GM12878 (cell line): ENCODE measurements at regions of chr3 and their contacts with region 1.

Region 1: GRCh38 chr3:36700537-36701248 is 63.7 kb downstream of the DCLK3 start:
- DNase-seq: no peak
- ATAC-seq: peak; percentile 95
- H3K4me3 ChIP-seq: no peak overlapping the region
- H3K27ac ChIP-seq: no peak overlapping the region
- H3K4me1 ChIP-seq: no peaks in the 10 kb centered on the region
- H3K27me3 ChIP-seq: peaks cover 0 to 1% of the 10 kb centered on the region in 2 experiments; a peak in 1 of 4 replicates
- CTCF ChIP-seq: peak; percentile 78 to 88 (median 86)
- EP300 ChIP-seq: no peak
- POLR2A ChIP-seq: no peak
- RAD21 ChIP-seq: peak; percentile 94

Region 2: GRCh38 chr3:35965908-35966307 is 734.8 kb before region 1 on chr3:
- CTCF ChIA-PET with region 1: interaction called, 22 read pairs
- POLR2A ChIA-PET with region 1: no interaction called
- RAD21 ChIA-PET with region 1: interaction called, 4 read pairs
- SMC1A ChIA-PET with region 1: interaction called, 13 read pairs
- in situ Hi-C with region 1: loop called (anchors 5 kb)
- intact Hi-C with region 1: loop called (anchors 1 kb)
- DNase-seq: no peak
- ATAC-seq: peak; percentile 75
- H3K4me3 ChIP-seq: no peak overlapping the region
- H3K27ac ChIP-seq: no peak overlapping the region
- H3K4me1 ChIP-seq: no peaks in the 10 kb centered on the region
- H3K27me3 ChIP-seq: no peaks in the 10 kb centered on the region
- CTCF ChIP-seq: peak; percentile 22 to 59 (median 24); a peak in 4 of 6 replicates
- EP300 ChIP-seq: no peak
- POLR2A ChIP-seq: no peak
- RAD21 ChIP-seq: peak; percentile 63

Region 3: GRCh38 chr3:36408146-36408545 is 292.5 kb before region 1 on chr3:
- CTCF ChIA-PET with region 1: no interaction called
- POLR2A ChIA-PET with region 1: no interaction called
- RAD21 ChIA-PET with region 1: no interaction called
- SMC1A ChIA-PET with region 1: no interaction called
- in situ Hi-C with region 1: no loop called
- intact Hi-C with region 1: loop called (anchors 1 kb)
- DNase-seq: no peak
- ATAC-seq: no peak; the same call in 2 of the 3 replicates
- H3K4me3 ChIP-seq: no peak overlapping the region
- H3K27ac ChIP-seq: no peak overlapping the region
- H3K4me1 ChIP-seq: no peaks in the 10 kb centered on the region
- H3K27me3 ChIP-seq: no peaks in the 10 kb centered on the region
- CTCF ChIP-seq: peak; percentile 3 to 13 (median 12); a peak in 2 of 6 replicates
- EP300 ChIP-seq: no peak
- POLR2A ChIP-seq: no peak
- RAD21 ChIP-seq: 0 out of 2 replicates have a peak, but pooled peaks have one; percentile 23

Region 4: GRCh38 chr3:36540888-36541518 is 159.7 kb before region 1 on chr3:
- CTCF ChIA-PET with region 1: no interaction called
- POLR2A ChIA-PET with region 1: no interaction called
- RAD21 ChIA-PET with region 1: interaction called, 3 read pairs
- SMC1A ChIA-PET with region 1: no interaction called
- in situ Hi-C with region 1: no loop called
- intact Hi-C with region 1: loop called (anchors 10 kb)
- DNase-seq: no peak
- ATAC-seq: no peak
- H3K4me3 ChIP-seq: no peak overlapping the region
- H3K27ac ChIP-seq: no peak overlapping the region
- H3K4me1 ChIP-seq: no peaks in the 10 kb centered on the region
- H3K27me3 ChIP-seq: peaks cover 0 to 1% of the 10 kb centered on the region in 2 experiments; a peak in 2 of 4 replicates
- CTCF ChIP-seq: peak; percentile 50 to 65 (median 63)
- EP300 ChIP-seq: no peak
- POLR2A ChIP-seq: no peak
- RAD21 ChIP-seq: peak; percentile 39

Region 5: GRCh38 chr3:36591959-36592358 is 108.7 kb before region 1 on chr3:
- CTCF ChIA-PET with region 1: no interaction called
- POLR2A ChIA-PET with region 1: no interaction called
- RAD21 ChIA-PET with region 1: no interaction called
- SMC1A ChIA-PET with region 1: no interaction called
- in situ Hi-C with region 1: no loop called
- intact Hi-C with region 1: loop called (anchors 5 kb)
- DNase-seq: no peak
- ATAC-seq: no peak
- H3K4me3 ChIP-seq: no peak overlapping the region
- H3K27ac ChIP-seq: no peak overlapping the region
- H3K4me1 ChIP-seq: no peaks in the 10 kb centered on the region
- H3K27me3 ChIP-seq: no peaks in the 10 kb centered on the region
- CTCF ChIP-seq: no peak
- EP300 ChIP-seq: no peak
- POLR2A ChIP-seq: no peak
- RAD21 ChIP-seq: no peak